Heart right ventricle (tissue), 16 donors: ENCODE measurements at regions of chr12 and their contacts with region 1.

Region 1: GRCh38 chr12:41286426-41286825 is 98.3 kb downstream of the PDZRN4 start:
- DNase-seq: no peak
- ATAC-seq: no peak
- H3K4me3 ChIP-seq: no peak overlapping the region
- H3K27ac ChIP-seq: no peak overlapping the region
- H3K4me1 ChIP-seq: no peaks in the 10 kb centered on the region
- H3K27me3 ChIP-seq: no peaks in the 10 kb centered on the region
- CTCF ChIP-seq: no peak

Region 2: DNA sequence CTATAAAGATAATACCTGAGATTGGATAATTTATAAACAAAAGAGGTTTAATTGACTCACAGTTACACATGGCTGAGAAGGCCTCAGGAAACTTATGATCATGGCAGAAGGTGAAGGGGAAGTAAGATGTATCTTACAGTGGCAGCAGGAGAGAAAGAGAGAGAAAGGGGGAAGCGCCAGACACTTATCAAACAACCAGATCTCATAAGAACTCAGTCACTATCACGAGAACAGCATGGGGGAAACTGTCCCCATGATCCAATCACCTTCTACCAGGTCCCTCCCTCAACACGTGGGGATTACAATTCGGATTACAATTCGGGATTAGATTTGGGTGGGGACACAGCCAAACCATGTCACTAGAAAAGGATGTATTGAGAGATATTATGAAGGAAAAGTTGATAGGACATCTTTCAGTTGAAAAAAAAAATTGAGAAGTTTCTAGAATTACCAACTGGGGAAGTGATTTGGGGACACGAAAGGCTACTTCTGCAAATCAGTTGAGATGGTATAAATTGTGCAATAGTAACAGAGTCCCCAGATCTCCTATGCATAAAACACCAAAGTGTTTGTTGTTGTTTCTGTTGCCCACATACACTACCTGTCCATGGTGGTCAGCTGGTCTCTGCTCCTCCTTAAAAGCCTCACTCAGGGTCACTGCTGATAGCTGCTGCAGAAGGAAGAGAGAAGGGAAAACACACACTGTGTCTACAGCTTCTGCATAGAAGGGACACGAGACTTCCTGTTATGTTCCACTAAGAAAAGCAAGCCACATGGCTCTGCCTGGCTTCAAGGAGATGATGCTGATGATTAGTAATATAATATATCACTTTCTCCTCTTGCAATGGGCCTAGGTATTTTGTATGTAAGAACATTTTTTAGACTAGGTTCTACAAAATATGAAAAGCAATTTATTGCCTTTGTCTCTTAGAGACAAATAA is 367.2 kb after region 1 on chr12:
- intact Hi-C with region 1: loop called in 1 of 10 experiments (anchors 10 kb)
- DNase-seq: no peak
- ATAC-seq: no peak
- H3K4me3 ChIP-seq: no peak overlapping the region
- H3K27ac ChIP-seq: no peak overlapping the region
- H3K4me1 ChIP-seq: no peaks in the 10 kb centered on the region
- H3K27me3 ChIP-seq: no peaks in the 10 kb centered on the region
- CTCF ChIP-seq: no peak

Region 3: DNA sequence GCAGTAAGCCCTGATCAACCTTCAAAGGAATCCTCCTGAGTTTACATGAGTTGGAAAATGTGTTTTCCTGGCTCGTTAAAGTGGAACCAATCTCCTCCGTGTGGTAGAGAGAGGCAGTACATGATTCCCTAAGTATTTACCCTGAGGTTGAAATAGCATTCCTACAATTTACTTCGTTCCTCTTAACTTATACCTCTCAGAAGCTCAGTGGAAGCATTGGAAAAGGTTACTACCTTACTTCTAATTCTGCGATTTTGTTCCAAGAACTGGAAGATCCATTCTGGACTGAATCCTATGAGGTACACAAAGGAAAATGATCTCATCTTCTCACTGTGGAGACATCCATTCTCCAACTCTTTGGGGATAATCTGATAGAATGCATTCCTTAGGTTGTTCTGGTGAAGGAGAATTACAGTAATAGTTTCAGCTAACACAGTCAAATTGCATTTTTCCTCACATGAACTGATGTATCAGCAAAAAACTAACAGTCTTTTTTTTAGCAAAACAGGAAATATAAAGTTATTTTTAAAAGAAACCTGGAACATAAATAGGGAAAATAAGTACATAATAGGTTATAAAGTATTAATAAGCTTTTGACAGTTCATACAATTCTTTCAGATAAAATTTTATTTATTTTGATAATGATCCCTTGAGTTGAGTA is 377.3 kb after region 1 on chr12:
- intact Hi-C with region 1: loop called in 2 of 10 experiments (anchors 10 kb)
- DNase-seq: no peak
- ATAC-seq: no peak
- H3K4me3 ChIP-seq: no peak overlapping the region
- H3K27ac ChIP-seq: no peak overlapping the region
- H3K4me1 ChIP-seq: peaks cover 0 to 5% (median 0%) of the 10 kb centered on the region in 9 donors
- H3K27me3 ChIP-seq: no peaks in the 10 kb centered on the region
- CTCF ChIP-seq: peak in 7 of 9 donors; percentile 31 to 60 (median 46)